ENCODE measurements at regions of chr22 and their contacts with region 1.

Region 1: DNA sequence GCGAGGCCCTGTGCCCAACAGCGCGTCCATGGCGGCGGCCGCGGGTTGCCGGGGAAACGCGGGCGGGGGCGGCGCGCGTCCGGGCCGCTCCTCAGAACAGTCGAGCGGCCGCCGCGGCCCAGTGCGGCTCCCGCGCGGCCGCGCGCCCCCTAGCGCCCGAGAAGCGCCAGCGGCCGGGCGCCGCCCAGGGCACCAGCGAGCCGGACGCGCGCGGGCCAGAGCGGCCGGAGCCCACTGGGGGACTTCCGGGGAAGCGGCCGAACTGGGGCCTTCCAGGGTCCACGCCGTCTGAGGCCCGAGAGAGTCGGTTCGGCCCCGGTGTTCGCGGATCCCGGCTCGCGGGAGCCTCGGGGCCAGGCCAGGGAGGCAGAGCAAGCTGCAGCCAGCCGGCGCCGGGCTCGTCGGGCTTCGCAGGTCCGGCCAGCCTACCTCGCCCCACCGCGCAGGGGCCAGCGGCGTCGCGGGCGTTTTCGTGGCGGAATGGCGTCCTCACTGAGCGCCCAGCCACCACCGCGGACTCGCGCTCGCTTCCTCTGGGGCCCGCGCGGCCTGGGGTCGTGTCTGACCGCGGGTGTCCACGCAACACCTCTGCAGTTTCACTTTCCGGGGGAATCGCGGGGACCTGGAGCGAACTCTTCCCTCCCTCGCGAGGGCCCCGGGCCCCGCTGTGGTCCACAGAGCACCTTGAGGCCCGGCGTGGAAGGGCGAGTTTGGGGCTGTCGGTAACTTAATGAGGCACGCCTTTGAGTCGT is at the start of gene DENND6B:
- DNase-seq: peak; percentile 92
- ATAC-seq: peak; percentile 97
- H3K4me3 ChIP-seq: peak within 1 kb of the TSS; percentile 78
- H3K27ac ChIP-seq: peak within 1 kb of the TSS; percentile 98
- H3K4me1 ChIP-seq: peaks cover 10% of the 10 kb centered on the region
- H3K27me3 ChIP-seq: no peaks in the 10 kb centered on the region
- CTCF ChIP-seq: peak; percentile 46
- total RNA-seq, gene DENND6B: 9.3 TPM

Region 2: DNA sequence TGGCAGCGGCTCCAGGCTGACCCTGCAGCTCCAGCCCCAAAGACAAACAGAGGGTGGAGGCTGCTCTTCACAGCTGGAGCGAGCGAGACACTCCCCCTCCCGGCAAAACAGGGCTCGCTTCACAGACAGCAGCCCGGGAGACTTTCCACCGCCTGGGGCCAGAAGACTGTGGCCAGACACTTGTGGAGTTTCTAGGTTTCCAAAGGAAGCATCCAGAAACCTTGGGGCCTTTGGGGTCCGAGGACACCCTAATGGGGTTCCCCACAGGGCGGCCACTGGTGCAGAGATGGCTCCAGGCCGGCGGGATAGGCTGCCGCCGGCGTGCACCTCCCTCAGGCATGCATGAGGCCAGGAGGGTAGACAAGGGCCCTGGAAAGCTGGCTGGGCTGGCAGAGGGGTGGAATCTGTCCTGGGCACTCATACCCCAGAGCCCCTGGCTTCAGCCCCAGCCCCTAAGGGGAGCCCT is 314.4 kb before region 1 on chr22 and contains the start of gene IL17REL:
- intact Hi-C with region 1: no loop called
- DNase-seq: peak; percentile 57
- ATAC-seq: no peak
- H3K4me3 ChIP-seq: no peak within 1 kb of the TSS
- H3K27ac ChIP-seq: no peak within 1 kb of the TSS
- H3K4me1 ChIP-seq: peaks cover 6% of the 10 kb centered on the region
- H3K27me3 ChIP-seq: peaks cover 73% of the 10 kb centered on the region
- CTCF ChIP-seq: peak; percentile 4
- total RNA-seq, gene IL17REL: not detected

Region 3: DNA sequence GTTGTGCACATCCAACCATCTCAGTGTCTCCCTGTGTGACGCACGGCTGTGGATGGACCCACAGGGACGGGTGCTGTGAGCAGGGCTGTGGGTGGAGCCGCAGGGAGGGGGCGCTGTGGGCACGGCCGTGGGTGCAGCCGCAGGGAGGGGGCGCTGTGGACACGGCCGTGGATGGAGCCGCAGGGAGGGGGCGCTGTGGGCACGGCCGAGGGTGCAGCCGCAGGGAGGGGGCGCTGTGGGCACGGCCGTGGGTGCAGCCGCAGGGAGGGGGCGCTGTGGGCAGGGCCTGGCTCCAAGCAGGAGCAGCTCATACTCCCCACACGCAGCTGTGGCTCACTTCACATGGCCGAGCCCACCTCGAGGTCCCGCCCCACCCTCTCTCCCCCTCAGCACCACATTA is 51.0 kb before region 1 on chr22:
- intact Hi-C with region 1: loop called (anchors 10 kb)
- DNase-seq: peak; percentile 92
- ATAC-seq: peak; percentile 90
- H3K4me3 ChIP-seq: no peak overlapping the region
- H3K27ac ChIP-seq: no peak overlapping the region
- H3K4me1 ChIP-seq: peaks cover 11% of the 10 kb centered on the region
- H3K27me3 ChIP-seq: no peaks in the 10 kb centered on the region
- CTCF ChIP-seq: peak; percentile 62

Region 4: DNA sequence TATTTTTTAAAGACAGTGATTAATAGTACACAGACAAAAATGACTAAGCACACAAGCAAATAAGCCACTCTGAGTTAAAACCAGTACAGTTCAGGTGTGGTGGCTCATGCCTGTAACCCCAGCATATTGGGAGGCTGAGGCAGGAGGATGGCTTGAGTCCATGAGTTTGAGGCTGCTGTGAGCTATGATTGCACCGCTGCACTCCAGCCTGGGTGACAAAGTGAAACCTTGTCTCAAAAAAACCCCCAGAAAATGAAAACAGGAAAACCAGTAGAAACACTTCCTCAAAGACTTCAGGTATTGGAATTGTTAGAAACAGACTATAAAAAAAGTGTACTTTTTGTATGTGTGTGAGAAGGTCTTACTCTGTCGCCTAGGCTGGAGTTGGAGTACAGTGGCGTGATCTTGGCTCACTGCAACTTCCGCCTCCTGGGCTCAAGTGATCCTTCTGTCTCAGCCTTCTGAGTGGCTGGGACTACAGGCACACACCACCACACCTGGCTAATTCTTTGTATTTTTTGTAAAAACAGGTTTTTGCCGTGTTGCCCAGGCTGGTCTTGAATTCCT is 49.0 kb after region 1 on chr22:
- intact Hi-C with region 1: no loop called
- DNase-seq: no peak
- ATAC-seq: peak; percentile 73
- H3K4me3 ChIP-seq: no peak overlapping the region
- H3K27ac ChIP-seq: peak overlapping the region; percentile 58
- H3K4me1 ChIP-seq: no peaks in the 10 kb centered on the region
- H3K27me3 ChIP-seq: no peaks in the 10 kb centered on the region
- CTCF ChIP-seq: no peak

Measured in upper lobe of right lung (tissue), 1 donor.